ENCODE measurements at regions of chr3 and their contacts with region 1.

Region 1: GRCh38 chr3:190032924-190033323 is 87.8 kb downstream of the P3H2 start:
- DNase-seq: no peak
- H3K4me3 Mint-ChIP-seq: no peak overlapping the region
- H3K27ac Mint-ChIP-seq: peak overlapping the region; percentile 78
- H3K4me1 Mint-ChIP-seq: peaks cover 33% of the 10 kb centered on the region
- H3K27me3 Mint-ChIP-seq: no peaks in the 10 kb centered on the region
- CTCF ChIP-seq: no peak

Region 2: GRCh38 chr3:190012314-190012782 is 20.6 kb before region 1 on chr3:
- CTCF ChIA-PET with region 1: interaction called, 5 read pairs
- POLR2A ChIA-PET with region 1: interaction called, 17 read pairs
- intact Hi-C with region 1: no loop called
- DNase-seq: peak; percentile 61
- H3K4me3 Mint-ChIP-seq: peak overlapping the region; percentile 34
- H3K27ac Mint-ChIP-seq: peak overlapping the region; percentile 64
- H3K4me1 Mint-ChIP-seq: peaks cover 39% of the 10 kb centered on the region
- H3K27me3 Mint-ChIP-seq: no peaks in the 10 kb centered on the region
- CTCF ChIP-seq: no peak

Measured in MCF 10A (cell line).